Activated CD8-positive, alpha-beta T cell treated with anti-CD3 and anti-CD28 coated beads for 36 hours (primary cell): ENCODE measurements at regions of chr2 and their contacts with region 1.

Region 1: DNA sequence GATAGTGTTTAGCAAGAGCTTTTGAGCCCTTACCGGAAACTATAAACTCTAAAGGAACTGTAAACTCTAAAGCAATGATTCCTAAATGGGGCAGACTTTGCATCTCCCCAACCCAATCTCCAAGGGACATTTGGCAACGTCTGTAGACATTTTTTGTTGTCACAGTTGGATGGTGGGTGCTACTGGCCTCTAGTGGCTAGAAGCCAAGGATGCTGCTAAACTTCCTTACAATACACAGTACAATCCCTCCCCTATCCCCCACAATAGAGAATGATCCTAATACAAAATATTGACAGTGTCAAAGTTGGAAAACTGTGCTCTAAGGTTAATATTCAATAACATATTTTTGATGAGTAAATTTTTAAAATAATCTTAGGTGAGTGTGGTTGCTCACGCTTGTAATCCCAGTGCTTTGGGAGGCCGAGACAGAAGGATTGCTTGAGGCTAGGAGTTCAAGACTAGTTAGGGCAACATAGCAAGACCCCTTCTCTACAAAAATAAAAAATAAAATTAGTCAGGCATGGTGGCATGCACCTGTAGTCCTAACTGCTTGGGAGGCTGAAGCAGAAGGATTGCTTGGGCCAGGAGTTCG is 66.7 kb downstream of the PTPN4 start:
- DNase-seq: peak; percentile 59
- ATAC-seq: peak; percentile 48
- H3K4me3 Mint-ChIP-seq: no peak overlapping the region
- H3K27ac Mint-ChIP-seq: no peak overlapping the region
- H3K4me1 Mint-ChIP-seq: peaks cover 52% of the 10 kb centered on the region
- H3K27me3 Mint-ChIP-seq: no peaks in the 10 kb centered on the region
- CTCF ChIP-seq: peak; percentile 65

Region 2: DNA sequence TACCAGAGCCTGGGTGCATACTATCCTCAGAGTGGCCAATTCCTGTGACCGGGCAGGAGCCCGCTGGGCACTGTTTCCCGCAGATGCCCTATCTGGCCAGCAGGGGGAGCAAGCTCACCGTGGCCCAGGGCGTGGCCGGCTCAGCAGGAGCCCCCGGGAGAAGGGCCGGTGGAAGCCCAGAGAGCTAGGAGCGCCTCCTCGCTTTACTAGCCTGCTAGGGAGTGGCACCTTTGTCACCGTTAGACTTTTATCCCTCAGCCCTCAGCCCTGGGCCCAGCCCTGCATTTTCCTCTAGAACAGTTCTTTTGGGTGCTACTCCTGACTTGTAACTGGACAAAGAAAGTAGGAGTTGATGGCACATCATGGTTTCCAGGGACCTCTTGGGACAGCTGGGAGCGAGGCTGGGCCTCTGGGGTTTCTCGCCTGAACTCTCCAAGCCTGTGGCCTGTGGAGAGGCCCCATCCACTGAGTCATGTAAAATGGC is 123.5 kb before region 1 on chr2:
- CTCF ChIA-PET with region 1: interaction called, 25 read pairs
- POLR2A ChIA-PET with region 1: interaction called, 3 read pairs
- intact Hi-C with region 1: loop called (anchors 2 kb)
- DNase-seq: peak; percentile 75
- ATAC-seq: peak; percentile 92
- H3K4me3 Mint-ChIP-seq: no peak overlapping the region
- H3K27ac Mint-ChIP-seq: no peak overlapping the region
- H3K4me1 Mint-ChIP-seq: peaks cover 12% of the 10 kb centered on the region
- H3K27me3 Mint-ChIP-seq: no peaks in the 10 kb centered on the region
- CTCF ChIP-seq: peak; percentile 93

Region 3: GRCh38 chr2:119753041-119753929 is 73.2 kb before region 1 on chr2:
- CTCF ChIA-PET with region 1: interaction called, 43 read pairs
- POLR2A ChIA-PET with region 1: interaction called, 3 read pairs
- intact Hi-C with region 1: loop called (anchors 2 kb)
- DNase-seq: peak; percentile 28
- ATAC-seq: peak; percentile 81
- H3K4me3 Mint-ChIP-seq: no peak overlapping the region
- H3K27ac Mint-ChIP-seq: no peak overlapping the region
- H3K4me1 Mint-ChIP-seq: peaks cover 13% of the 10 kb centered on the region
- H3K27me3 Mint-ChIP-seq: no peaks in the 10 kb centered on the region
- CTCF ChIP-seq: peak; percentile 69